T-cell (primary cell): ENCODE measurements at regions of chr4 and their contacts with region 1.

Region 1: GRCh38 chr4:48275686-48276085 is 6.0 kb upstream of the TEC start:
- DNase-seq: no peak
- ATAC-seq: no peak
- H3K4me3 ChIP-seq: no peak overlapping the region
- H3K4me3 Mint-ChIP-seq: no peak overlapping the region
- H3K27ac ChIP-seq: no peak overlapping the region
- H3K27ac Mint-ChIP-seq: no peak overlapping the region
- H3K4me1 ChIP-seq: no peaks in the 10 kb centered on the region
- H3K4me1 Mint-ChIP-seq: peaks cover 0 to 4% (median 4%) of the 10 kb centered on the region in 3 donors
- H3K27me3 ChIP-seq: peaks cover 0 to 11% of the 10 kb centered on the region in 2 experiments
- H3K27me3 Mint-ChIP-seq: peaks cover 8 to 13% of the 10 kb centered on the region in 2 donors

Region 2: DNA sequence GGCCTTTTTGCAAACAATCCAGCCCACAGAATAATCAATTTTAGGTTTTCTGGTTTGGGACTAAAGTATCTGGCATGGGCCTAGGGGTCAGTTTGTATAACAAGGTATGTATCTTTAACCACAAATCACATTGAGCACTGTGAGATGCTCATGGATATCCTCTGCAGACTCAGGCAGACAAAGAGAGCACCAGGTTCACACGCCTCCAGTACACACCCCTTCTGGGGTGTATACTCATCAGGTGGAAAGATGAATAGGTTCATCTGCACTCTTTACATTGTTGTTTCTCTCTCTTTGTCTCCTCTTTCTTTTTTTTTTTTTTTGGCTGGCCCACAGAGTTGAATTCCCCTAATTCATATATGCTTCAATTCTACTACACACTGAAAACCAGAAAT is 27.1 kb before region 1 on chr4:
- CTCF ChIA-PET with region 1: interaction called in 1 of 2 experiments, 12 read pairs
- POLR2A ChIA-PET with region 1: no interaction called
- DNase-seq: no peak
- ATAC-seq: no peak
- H3K4me3 ChIP-seq: no peak overlapping the region
- H3K4me3 Mint-ChIP-seq: no peak overlapping the region
- H3K27ac ChIP-seq: no peak overlapping the region
- H3K27ac Mint-ChIP-seq: no peak overlapping the region
- H3K4me1 ChIP-seq: no peaks in the 10 kb centered on the region
- H3K4me1 Mint-ChIP-seq: peaks cover 0 to 3% (median 0%) of the 10 kb centered on the region in 3 donors
- H3K27me3 ChIP-seq: no peaks in the 10 kb centered on the region
- H3K27me3 Mint-ChIP-seq: no peaks in the 10 kb centered on the region

Region 3: DNA sequence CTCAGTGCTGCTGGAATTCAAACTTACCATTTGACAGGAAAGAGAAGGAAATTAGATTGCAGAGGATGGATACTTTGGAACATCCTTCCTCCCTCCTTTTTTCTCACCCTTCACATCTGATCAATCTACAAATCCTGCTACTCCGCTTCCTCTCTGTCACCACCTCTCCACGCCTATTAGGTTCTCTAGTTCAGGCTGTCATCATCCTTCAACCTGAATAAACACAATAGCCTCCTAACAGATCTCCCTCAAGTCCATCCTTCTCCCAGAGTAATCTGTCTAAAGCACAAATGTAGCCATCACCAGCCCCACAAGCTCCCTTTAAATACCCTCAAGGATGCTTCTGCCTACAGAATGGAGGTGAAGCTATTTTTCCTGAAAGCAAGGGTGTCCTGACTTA is 45.6 kb after region 1 on chr4:
- CTCF ChIA-PET with region 1: no interaction called
- POLR2A ChIA-PET with region 1: no interaction called
- DNase-seq: no peak
- ATAC-seq: no peak
- H3K4me3 ChIP-seq: no peak overlapping the region
- H3K4me3 Mint-ChIP-seq: no peak overlapping the region
- H3K27ac ChIP-seq: no peak overlapping the region
- H3K27ac Mint-ChIP-seq: no peak overlapping the region
- H3K4me1 ChIP-seq: no peaks in the 10 kb centered on the region
- H3K4me1 Mint-ChIP-seq: no peaks in the 10 kb centered on the region
- H3K27me3 ChIP-seq: no peaks in the 10 kb centered on the region
- H3K27me3 Mint-ChIP-seq: no peaks in the 10 kb centered on the region